Naive thymus-derived CD4-positive, alpha-beta T cell (primary cell): ENCODE measurements at regions of chr3 and their contacts with region 1.

Region 1: DNA sequence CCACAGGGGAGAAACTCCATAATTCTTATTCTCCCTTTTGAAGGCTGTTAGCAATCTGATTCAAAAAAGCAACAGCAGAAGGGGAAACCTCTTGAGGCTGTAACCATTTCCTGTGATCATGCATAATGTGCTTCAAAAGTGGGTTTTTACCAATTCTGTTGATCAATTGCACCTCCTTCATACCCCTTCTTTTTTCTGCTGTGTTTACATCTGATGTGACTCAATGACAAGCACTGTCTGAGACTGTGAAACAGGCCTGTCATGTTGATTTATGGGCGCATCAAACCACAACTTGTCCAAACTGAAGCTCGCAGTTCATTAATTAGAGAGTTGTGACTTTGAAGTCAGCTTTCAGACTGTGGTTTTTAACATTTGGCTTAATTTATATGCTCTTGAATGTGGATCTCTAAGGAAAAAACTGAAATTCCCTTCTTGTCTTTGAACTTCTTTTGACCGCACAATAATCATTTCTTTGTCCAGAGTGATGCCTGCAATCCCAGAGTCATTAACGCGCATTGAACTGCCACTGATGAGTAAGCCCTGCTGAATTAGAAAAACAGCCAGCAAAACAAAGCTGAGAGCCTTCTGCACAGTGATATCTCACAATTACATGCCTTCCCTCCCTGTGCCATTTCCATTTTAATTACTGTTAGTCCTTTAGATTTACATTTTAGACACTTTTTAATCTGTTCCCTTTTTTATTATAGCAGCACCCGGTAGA is 532.8 kb downstream of the FOXP1 start:
- DNase-seq: peak in 7 of 9 donors; percentile 52 to 82 (median 75)
- ATAC-seq: peak; percentile 97
- H3K4me3 ChIP-seq: no peak overlapping the region
- H3K4me3 Mint-ChIP-seq: peak overlapping the region in 8 of 10 donors; percentile 45 to 83 (median 64)
- H3K27ac ChIP-seq: peak overlapping the region; percentile 71
- H3K27ac Mint-ChIP-seq: peak overlapping the region in 6 of 9 donors; percentile 78 to 99 (median 95)
- H3K4me1 ChIP-seq: peaks cover 24 to 98% of the 10 kb centered on the region in 2 donors
- H3K4me1 Mint-ChIP-seq: peaks cover 73 to 100% (median 100%) of the 10 kb centered on the region in 7 donors
- H3K27me3 ChIP-seq: no peaks in the 10 kb centered on the region
- H3K27me3 Mint-ChIP-seq: no peaks in the 10 kb centered on the region

Region 2: DNA sequence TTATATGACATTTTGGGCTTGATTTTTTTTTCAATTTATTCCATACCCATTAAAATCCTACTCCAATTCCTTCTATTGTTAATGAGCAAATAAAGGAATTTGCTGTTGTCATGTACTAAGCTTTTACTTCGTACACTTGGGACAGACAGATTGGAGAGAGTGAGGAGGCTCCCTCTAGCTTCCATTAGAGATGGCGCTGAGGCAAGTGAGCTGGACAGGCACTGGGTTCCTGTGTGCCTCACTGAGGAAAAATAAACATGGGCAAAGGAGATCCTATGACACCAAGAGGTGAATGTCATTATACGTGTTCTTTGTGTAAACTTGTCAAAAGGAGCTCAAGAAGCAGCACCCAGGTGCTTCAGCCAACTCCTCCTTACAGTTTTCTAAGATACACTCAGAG is 297.1 kb before region 1 on chr3:
- CTCF ChIA-PET with region 1: no interaction called
- POLR2A ChIA-PET with region 1: no interaction called
- intact Hi-C with region 1: no loop called
- DNase-seq: no peak
- ATAC-seq: no peak
- H3K4me3 ChIP-seq: no peak overlapping the region
- H3K4me3 Mint-ChIP-seq: no peak overlapping the region
- H3K27ac ChIP-seq: no peak overlapping the region
- H3K27ac Mint-ChIP-seq: no peak overlapping the region
- H3K4me1 ChIP-seq: no peaks in the 10 kb centered on the region
- H3K4me1 Mint-ChIP-seq: no peaks in the 10 kb centered on the region
- H3K27me3 ChIP-seq: no peaks in the 10 kb centered on the region
- H3K27me3 Mint-ChIP-seq: peaks cover 0 to 19% (median under 1%) of the 10 kb centered on the region in 5 donors

Region 3: DNA sequence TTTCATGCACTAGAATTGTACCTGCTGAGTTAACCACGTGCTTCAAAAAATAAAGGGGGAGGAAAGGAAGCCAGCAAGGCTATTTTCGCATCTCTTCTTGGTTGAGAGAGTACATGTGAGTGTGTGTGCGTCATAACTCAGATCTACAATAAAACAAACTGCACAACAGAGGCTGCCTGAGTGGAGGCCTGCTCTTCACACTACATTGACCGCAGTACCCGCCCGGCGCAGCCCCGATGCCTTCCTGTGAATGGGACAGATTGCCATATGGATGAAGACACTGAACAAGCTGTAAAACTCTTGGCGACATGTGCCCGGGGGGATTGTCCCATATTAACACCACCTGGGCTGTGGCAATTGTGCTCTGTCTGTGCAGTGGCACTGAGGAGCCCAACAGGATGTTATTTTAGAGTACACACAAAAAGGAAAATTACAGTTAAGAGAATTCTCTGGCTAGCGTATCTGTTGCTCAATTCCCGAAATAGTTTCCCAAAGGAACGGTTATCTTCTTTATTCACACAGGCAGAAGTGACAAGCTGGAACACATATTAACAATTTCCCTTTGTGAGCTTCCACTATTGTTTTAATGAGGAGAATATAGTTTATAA is 18.7 kb before region 1 on chr3:
- CTCF ChIA-PET with region 1: interaction called, 4 read pairs
- POLR2A ChIA-PET with region 1: interaction called, 3 read pairs
- intact Hi-C with region 1: loop called in 1 of 2 experiments (anchors 2 kb)
- DNase-seq: peak in 7 of 9 donors; percentile 27 to 66 (median 46)
- ATAC-seq: peak; percentile 76
- H3K4me3 ChIP-seq: no peak overlapping the region
- H3K4me3 Mint-ChIP-seq: peak overlapping the region in 7 of 10 donors; percentile 10 to 59 (median 39)
- H3K27ac ChIP-seq: peak overlapping the region; percentile 51
- H3K27ac Mint-ChIP-seq: peak overlapping the region; percentile 48 to 92 (median 88)
- H3K4me1 ChIP-seq: peaks cover 3 to 47% of the 10 kb centered on the region in 2 donors
- H3K4me1 Mint-ChIP-seq: peaks cover 49 to 99% (median 96%) of the 10 kb centered on the region in 7 donors
- H3K27me3 ChIP-seq: no peaks in the 10 kb centered on the region
- H3K27me3 Mint-ChIP-seq: no peaks in the 10 kb centered on the region